ENCODE measurements at regions of chr3 and their contacts with region 1.

Region 1: GRCh38 chr3:178718995-178719635 is 182.9 kb downstream of the KCNMB2 start:
- DNase-seq: no peak

Region 2: GRCh38 chr3:178588628-178589027 is 130.5 kb before region 1 on chr3:
- intact Hi-C with region 1: no loop called
- DNase-seq: no peak

Region 3: DNA sequence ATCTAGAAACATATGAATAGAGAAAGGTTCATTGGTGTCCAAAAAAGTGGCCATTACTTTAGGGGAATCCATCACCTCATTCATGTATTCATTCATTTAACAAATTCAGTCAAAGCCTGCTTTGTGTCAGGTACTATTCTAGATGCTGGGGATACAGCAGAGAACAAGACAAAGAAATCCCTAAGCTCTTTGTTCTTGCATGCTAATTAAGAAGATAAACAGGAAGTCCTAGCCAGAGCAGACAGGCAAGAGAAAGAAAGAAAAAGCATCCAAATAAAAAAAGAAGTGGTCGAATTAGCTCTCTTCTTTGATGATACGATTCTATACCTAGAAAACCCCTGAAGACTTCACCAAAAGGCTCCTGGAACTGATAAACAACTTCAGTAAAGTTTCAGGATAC is 364.9 kb after region 1 on chr3:
- intact Hi-C with region 1: loop called in 1 of 2 experiments (anchors 5 kb)
- DNase-seq: no peak